ENCODE measurements at regions of chr9 and their contacts with region 1.

Region 1: GRCh38 chr9:10232352-10232930 is 380.4 kb downstream of the PTPRD start:
- DNase-seq: no peak
- H3K4me3 ChIP-seq: no peak overlapping the region
- H3K4me3 Mint-ChIP-seq: no peak overlapping the region
- H3K27ac Mint-ChIP-seq: no peak overlapping the region
- H3K4me1 ChIP-seq: no peaks in the 10 kb centered on the region
- H3K4me1 Mint-ChIP-seq: no peaks in the 10 kb centered on the region
- H3K27me3 ChIP-seq: no peaks in the 10 kb centered on the region
- H3K27me3 Mint-ChIP-seq: no peaks in the 10 kb centered on the region
- CTCF ChIP-seq: no peak

Region 2: DNA sequence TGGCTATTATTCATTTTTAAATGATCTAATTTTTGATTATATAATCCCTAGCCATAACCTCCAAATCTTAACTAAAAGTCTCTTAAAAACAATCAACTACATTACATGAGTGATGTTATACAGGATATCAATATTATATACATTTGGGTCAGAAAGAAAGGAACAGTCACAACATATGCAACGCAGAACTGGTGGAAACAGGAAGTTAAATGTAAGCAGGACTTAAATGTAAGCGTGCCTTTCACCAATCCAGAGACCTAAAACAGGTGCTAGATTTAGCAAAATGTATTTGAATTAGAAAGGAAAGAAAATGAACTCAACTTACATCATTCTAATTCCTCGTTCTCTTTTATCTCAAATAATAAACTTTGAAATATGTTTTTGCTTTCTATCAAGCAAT is 358.2 kb before region 1 on chr9:
- CTCF ChIA-PET with region 1: no interaction called
- POLR2A ChIA-PET with region 1: no interaction called
- intact Hi-C with region 1: no loop called
- DNase-seq: no peak
- H3K4me3 ChIP-seq: no peak overlapping the region
- H3K4me3 Mint-ChIP-seq: no peak overlapping the region
- H3K27ac Mint-ChIP-seq: no peak overlapping the region
- H3K4me1 ChIP-seq: no peaks in the 10 kb centered on the region
- H3K4me1 Mint-ChIP-seq: no peaks in the 10 kb centered on the region
- H3K27me3 ChIP-seq: no peaks in the 10 kb centered on the region
- H3K27me3 Mint-ChIP-seq: no peaks in the 10 kb centered on the region
- CTCF ChIP-seq: no peak

Region 3: DNA sequence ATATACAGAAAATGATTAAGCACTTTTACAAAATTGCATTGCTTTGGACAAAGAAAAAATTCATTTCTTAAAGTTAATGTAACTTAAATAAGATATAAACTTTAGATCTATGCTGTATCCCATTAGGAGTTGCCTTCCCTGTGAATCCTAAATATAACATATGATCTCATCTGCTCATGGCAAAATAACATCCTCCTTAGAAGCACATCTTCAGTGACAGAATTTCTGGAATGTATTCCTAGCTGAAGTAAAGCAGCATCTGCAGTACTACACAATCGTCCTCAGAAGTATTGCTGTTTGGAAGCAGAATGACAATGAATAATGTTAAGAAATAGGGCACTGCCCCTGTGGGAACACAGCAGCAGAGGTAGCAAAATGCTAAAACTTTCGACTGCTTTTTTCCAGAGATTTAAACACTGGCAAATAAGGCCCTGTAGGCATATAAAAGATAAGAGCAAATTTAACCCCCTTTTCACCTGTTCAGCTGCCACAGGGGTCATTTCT is 190.7 kb before region 1 on chr9:
- CTCF ChIA-PET with region 1: no interaction called
- POLR2A ChIA-PET with region 1: no interaction called
- intact Hi-C with region 1: no loop called
- DNase-seq: no peak
- H3K4me3 ChIP-seq: no peak overlapping the region
- H3K4me3 Mint-ChIP-seq: no peak overlapping the region
- H3K27ac Mint-ChIP-seq: no peak overlapping the region
- H3K4me1 ChIP-seq: no peaks in the 10 kb centered on the region
- H3K4me1 Mint-ChIP-seq: no peaks in the 10 kb centered on the region
- H3K27me3 ChIP-seq: no peaks in the 10 kb centered on the region
- H3K27me3 Mint-ChIP-seq: no peaks in the 10 kb centered on the region
- CTCF ChIP-seq: no peak

Region 4: DNA sequence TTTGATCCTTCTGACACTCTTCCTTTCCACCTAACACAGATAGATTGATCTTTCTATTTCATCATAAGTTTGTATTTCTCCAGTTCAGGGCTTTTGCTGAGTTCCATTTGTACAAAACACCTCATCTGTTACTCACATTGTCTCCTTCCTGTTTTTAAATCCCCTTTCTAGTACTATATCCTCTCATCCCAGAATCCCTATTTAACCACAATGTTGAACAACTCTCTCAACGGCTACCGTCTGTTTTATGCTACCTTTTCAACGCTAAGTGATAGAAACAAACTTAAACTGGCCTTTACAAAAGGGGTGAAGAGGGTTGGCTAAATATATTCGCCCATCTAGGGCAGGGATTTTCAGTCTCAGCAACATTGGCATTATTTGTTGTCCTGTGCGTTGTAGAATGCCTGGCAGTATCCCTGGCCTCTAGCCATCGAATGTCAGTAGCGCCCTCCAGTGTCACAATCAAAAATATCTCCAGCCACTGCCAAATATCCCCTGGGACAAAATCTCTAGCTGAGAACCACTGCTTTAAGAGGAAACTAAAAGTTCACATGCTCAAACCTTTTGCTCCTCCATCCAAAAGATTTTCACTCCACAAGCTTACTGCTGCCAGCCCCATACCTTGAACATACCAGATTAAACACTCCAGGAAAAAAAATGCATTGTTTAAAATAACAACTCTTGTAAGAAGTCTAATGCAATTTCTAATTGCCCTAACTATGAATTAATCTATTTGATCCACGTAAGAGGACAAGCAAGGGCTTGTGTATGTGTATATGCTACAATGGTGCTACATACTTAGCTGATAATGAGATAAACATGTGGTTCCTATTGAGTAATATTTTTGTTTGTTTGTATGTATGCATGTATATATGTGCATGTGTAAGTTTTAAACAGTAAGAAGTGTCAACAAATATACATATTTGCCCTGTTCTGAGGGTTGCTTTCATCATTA is 36.4 kb after region 1 on chr9:
- CTCF ChIA-PET with region 1: no interaction called
- POLR2A ChIA-PET with region 1: no interaction called
- intact Hi-C with region 1: loop called (anchors 2 kb)
- DNase-seq: peak in 1 of 2 experiments; percentile 3
- H3K4me3 ChIP-seq: no peak overlapping the region
- H3K4me3 Mint-ChIP-seq: no peak overlapping the region
- H3K27ac Mint-ChIP-seq: no peak overlapping the region
- H3K4me1 ChIP-seq: no peaks in the 10 kb centered on the region
- H3K4me1 Mint-ChIP-seq: no peaks in the 10 kb centered on the region
- H3K27me3 ChIP-seq: no peaks in the 10 kb centered on the region
- H3K27me3 Mint-ChIP-seq: no peaks in the 10 kb centered on the region
- CTCF ChIP-seq: no peak

Region 5: GRCh38 chr9:10282084-10282483 is 49.6 kb after region 1 on chr9:
- CTCF ChIA-PET with region 1: no interaction called
- POLR2A ChIA-PET with region 1: no interaction called
- intact Hi-C with region 1: no loop called
- DNase-seq: no peak
- H3K4me3 ChIP-seq: no peak overlapping the region
- H3K4me3 Mint-ChIP-seq: no peak overlapping the region
- H3K27ac Mint-ChIP-seq: no peak overlapping the region
- H3K4me1 ChIP-seq: no peaks in the 10 kb centered on the region
- H3K4me1 Mint-ChIP-seq: no peaks in the 10 kb centered on the region
- H3K27me3 ChIP-seq: no peaks in the 10 kb centered on the region
- H3K27me3 Mint-ChIP-seq: no peaks in the 10 kb centered on the region
- CTCF ChIP-seq: no peak

Measured in Caco-2 (cell line).